K562 (cell line): ENCODE measurements at regions of chr12 and their contacts with region 1.

Region 1: DNA sequence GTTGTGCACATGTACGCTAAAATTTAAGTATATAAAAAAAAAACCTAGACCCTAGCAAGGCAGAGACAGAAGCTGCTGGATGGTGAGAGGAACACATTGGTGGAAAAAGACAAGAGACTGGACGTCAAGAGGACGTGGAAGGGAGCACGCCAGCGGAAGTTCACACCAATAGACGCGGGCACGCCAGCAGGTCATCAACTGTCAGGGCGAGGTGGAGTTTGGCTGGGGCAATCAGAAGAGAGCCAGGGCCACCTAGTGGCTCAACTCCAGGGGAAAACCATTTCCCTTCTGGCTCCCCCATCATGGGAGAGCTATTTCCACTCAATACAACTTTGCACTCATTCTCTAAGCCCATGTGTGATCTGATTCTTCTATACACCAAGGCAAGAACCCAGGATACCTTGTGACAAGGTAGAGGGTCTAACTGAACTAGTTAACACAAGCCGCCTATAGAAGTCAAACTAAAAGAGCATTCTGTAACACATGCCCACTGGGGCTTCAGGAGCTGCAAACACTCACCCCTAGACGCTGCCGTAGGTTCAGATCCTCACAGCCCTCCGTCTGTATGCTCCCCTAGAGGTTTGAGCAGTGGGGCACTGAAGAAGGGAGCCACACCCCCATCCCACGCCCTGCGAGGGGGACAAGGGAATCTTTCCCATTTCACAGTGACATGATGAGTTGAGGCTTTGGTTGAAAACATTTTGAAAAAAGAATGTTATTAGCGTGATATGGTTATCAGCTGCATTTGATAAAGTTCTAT is 702.7 kb downstream of the TMTC2 start:
- DNase-seq: peak in 2 of 4 experiments; percentile 10 to 48
- ATAC-seq: peak; percentile 90
- H3K4me3 ChIP-seq: no peak overlapping the region
- H3K27ac ChIP-seq: no peak overlapping the region
- H3K4me1 ChIP-seq: no peaks in the 10 kb centered on the region
- H3K27me3 ChIP-seq: no peaks in the 10 kb centered on the region
- CTCF ChIP-seq: peak; percentile 45 to 59 (median 58); a peak in 5 of 6 replicates
- EP300 ChIP-seq: no peak
- POLR2A ChIP-seq: no peak
- RAD21 ChIP-seq: peak; percentile 37 to 71; a peak in 3 of 4 replicates

Region 2: GRCh38 chr12:83005534-83006197 is 383.8 kb before region 1 on chr12:
- CTCF ChIA-PET with region 1: no interaction called
- POLR2A ChIA-PET with region 1: no interaction called
- in situ Hi-C with region 1: no loop called
- intact Hi-C with region 1: loop called (anchors 2 kb)
- DNase-seq: no peak
- ATAC-seq: no peak
- H3K4me3 ChIP-seq: no peak overlapping the region
- H3K27ac ChIP-seq: no peak overlapping the region
- H3K4me1 ChIP-seq: no peaks in the 10 kb centered on the region; a peak in 1 of 5 replicates
- H3K27me3 ChIP-seq: no peaks in the 10 kb centered on the region
- CTCF ChIP-seq: no peak
- EP300 ChIP-seq: no peak
- POLR2A ChIP-seq: no peak
- RAD21 ChIP-seq: no peak

Region 3: DNA sequence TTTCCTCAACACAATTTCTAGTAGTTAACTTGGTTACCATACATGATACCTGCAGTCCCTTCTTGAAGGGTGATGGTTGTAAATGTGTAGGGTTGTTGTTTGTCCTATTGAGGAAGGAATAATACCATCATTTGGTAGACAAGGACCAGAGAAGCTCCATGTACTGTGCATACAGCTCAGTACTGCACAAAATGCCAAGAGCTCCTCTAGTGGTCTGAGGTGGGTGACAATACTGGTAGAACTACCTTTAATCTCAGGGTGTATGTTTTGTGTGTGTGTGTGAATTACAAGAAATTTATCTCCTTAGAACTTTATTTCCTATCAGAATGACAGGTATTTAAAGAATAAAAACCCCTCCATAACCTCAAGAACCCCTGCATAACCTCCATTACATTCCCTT is 127.4 kb before region 1 on chr12:
- CTCF ChIA-PET with region 1: no interaction called
- POLR2A ChIA-PET with region 1: no interaction called
- in situ Hi-C with region 1: no loop called
- intact Hi-C with region 1: loop called (anchors 10 kb)
- DNase-seq: peak in 1 of 4 experiments; percentile 16
- ATAC-seq: peak; percentile 89
- H3K4me3 ChIP-seq: no peak overlapping the region
- H3K27ac ChIP-seq: no peak overlapping the region
- H3K4me1 ChIP-seq: no peaks in the 10 kb centered on the region; a peak in 1 of 5 replicates
- H3K27me3 ChIP-seq: no peaks in the 10 kb centered on the region
- CTCF ChIP-seq: peak; percentile 9 to 23 (median 21); a peak in 1 of 6 replicates
- EP300 ChIP-seq: no peak
- POLR2A ChIP-seq: no peak
- RAD21 ChIP-seq: peak in 1 of 2 experiments; percentile 48; a peak in 2 of 4 replicates